ENCODE measurements at regions of chr20 and their contacts with region 1.

Region 1: GRCh38 chr20:33401184-33401920 is at the start of gene CDK5RAP1:
- DNase-seq: peak; percentile 87
- H3K4me3 Mint-ChIP-seq: peak within 1 kb of the TSS; percentile 96
- H3K27ac Mint-ChIP-seq: peak within 1 kb of the TSS; percentile 89
- H3K4me1 Mint-ChIP-seq: peaks cover 17% of the 10 kb centered on the region
- H3K27me3 Mint-ChIP-seq: no peaks in the 10 kb centered on the region
- CTCF ChIP-seq: no peak
- total RNA-seq, gene CDK5RAP1: 41.0 and 45.0 TPM in 2 replicates

Region 2: GRCh38 chr20:33377366-33377765 is 24.0 kb before region 1 on chr20:
- CTCF ChIA-PET with region 1: no interaction called
- POLR2A ChIA-PET with region 1: interaction called, 11 read pairs
- intact Hi-C with region 1: no loop called
- DNase-seq: no peak
- H3K4me3 Mint-ChIP-seq: no peak overlapping the region
- H3K27ac Mint-ChIP-seq: no peak overlapping the region
- H3K4me1 Mint-ChIP-seq: peaks cover 9% of the 10 kb centered on the region
- H3K27me3 Mint-ChIP-seq: no peaks in the 10 kb centered on the region
- CTCF ChIP-seq: no peak

Region 3: DNA sequence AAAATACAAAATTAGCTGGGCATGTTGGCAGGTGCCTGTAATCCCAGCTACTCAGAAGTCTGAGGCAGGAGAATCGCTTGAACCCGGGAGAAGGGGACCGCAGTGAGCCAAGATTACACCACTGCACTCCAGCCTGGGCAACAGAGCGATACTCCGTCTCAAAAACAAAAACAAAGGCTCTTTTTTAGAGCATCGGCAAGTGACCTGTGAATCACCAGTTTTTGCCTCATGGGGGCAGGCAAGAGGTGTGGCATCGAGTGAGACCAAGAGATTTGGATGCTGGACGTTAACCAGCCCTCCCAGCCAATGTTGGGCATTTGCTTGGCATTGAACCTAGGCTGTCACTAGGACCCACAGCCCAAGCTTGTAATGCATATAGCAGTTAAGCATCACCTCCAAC is 14.6 kb after region 1 on chr20:
- CTCF ChIA-PET with region 1: interaction called, 5 read pairs
- POLR2A ChIA-PET with region 1: interaction called, 19 read pairs
- intact Hi-C with region 1: no loop called
- DNase-seq: peak; percentile 77
- H3K4me3 Mint-ChIP-seq: no peak overlapping the region
- H3K27ac Mint-ChIP-seq: no peak overlapping the region
- H3K4me1 Mint-ChIP-seq: no peaks in the 10 kb centered on the region
- H3K27me3 Mint-ChIP-seq: no peaks in the 10 kb centered on the region
- CTCF ChIP-seq: peak; percentile 42

Measured in MCF 10A (cell line).